ENCODE measurements at regions of chr4 and their contacts with region 1.

Region 1: GRCh38 chr4:163048447-163048846 is 118.2 kb downstream of the NAF1 start:
- DNase-seq: peak in 1 of 2 experiments; percentile 27
- H3K4me3 ChIP-seq: no peak overlapping the region
- H3K4me3 Mint-ChIP-seq: no peak overlapping the region
- H3K27ac Mint-ChIP-seq: no peak overlapping the region
- H3K4me1 ChIP-seq: peaks cover 3% of the 10 kb centered on the region; the same call in 1 of the 2 replicates
- H3K4me1 Mint-ChIP-seq: peaks cover 6% of the 10 kb centered on the region
- H3K27me3 ChIP-seq: no peaks in the 10 kb centered on the region
- H3K27me3 Mint-ChIP-seq: no peaks in the 10 kb centered on the region
- CTCF ChIP-seq: peak; percentile 42 to 47

Region 2: DNA sequence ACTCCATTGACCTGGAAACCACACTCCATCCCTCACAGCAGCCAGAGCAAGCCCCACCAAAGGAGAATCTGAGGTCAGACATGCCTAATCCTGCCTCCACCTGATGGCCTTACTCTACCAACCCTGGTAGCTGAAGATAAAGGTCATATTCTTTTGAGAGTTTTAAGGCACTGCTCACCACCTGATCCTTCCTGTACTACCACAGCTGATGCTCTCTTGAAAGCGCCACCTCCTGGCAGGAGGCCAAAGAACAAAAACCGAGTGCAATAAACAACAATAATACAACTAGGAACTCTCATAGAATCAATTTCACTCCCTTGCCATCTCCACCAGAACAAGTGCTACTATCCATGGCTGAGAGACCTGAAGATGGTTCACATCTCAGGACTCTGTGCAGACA is 183.3 kb before region 1 on chr4:
- CTCF ChIA-PET with region 1: no interaction called
- POLR2A ChIA-PET with region 1: no interaction called
- intact Hi-C with region 1: no loop called
- DNase-seq: peak in 1 of 2 experiments; percentile 21
- H3K4me3 ChIP-seq: no peak overlapping the region
- H3K4me3 Mint-ChIP-seq: no peak overlapping the region
- H3K27ac Mint-ChIP-seq: no peak overlapping the region
- H3K4me1 ChIP-seq: no peaks in the 10 kb centered on the region
- H3K4me1 Mint-ChIP-seq: no peaks in the 10 kb centered on the region
- H3K27me3 ChIP-seq: no peaks in the 10 kb centered on the region
- H3K27me3 Mint-ChIP-seq: no peaks in the 10 kb centered on the region
- CTCF ChIP-seq: peak in 1 of 2 experiments; percentile 4

Region 3: GRCh38 chr4:162988530-162988929 is 59.9 kb before region 1 on chr4:
- CTCF ChIA-PET with region 1: no interaction called
- POLR2A ChIA-PET with region 1: no interaction called
- intact Hi-C with region 1: no loop called
- DNase-seq: no peak
- H3K4me3 ChIP-seq: no peak overlapping the region
- H3K4me3 Mint-ChIP-seq: no peak overlapping the region
- H3K27ac Mint-ChIP-seq: no peak overlapping the region
- H3K4me1 ChIP-seq: no peaks in the 10 kb centered on the region
- H3K4me1 Mint-ChIP-seq: no peaks in the 10 kb centered on the region
- H3K27me3 ChIP-seq: no peaks in the 10 kb centered on the region
- H3K27me3 Mint-ChIP-seq: no peaks in the 10 kb centered on the region
- CTCF ChIP-seq: no peak

Region 4: GRCh38 chr4:163107754-163108153 is 59.3 kb after region 1 on chr4:
- CTCF ChIA-PET with region 1: no interaction called
- POLR2A ChIA-PET with region 1: no interaction called
- intact Hi-C with region 1: loop called (anchors 2 kb)
- DNase-seq: peak in 1 of 2 experiments; percentile 5
- H3K4me3 ChIP-seq: no peak overlapping the region
- H3K4me3 Mint-ChIP-seq: no peak overlapping the region
- H3K27ac Mint-ChIP-seq: no peak overlapping the region
- H3K4me1 ChIP-seq: no peaks in the 10 kb centered on the region
- H3K4me1 Mint-ChIP-seq: no peaks in the 10 kb centered on the region
- H3K27me3 ChIP-seq: no peaks in the 10 kb centered on the region
- H3K27me3 Mint-ChIP-seq: no peaks in the 10 kb centered on the region
- CTCF ChIP-seq: no peak

Region 5: DNA sequence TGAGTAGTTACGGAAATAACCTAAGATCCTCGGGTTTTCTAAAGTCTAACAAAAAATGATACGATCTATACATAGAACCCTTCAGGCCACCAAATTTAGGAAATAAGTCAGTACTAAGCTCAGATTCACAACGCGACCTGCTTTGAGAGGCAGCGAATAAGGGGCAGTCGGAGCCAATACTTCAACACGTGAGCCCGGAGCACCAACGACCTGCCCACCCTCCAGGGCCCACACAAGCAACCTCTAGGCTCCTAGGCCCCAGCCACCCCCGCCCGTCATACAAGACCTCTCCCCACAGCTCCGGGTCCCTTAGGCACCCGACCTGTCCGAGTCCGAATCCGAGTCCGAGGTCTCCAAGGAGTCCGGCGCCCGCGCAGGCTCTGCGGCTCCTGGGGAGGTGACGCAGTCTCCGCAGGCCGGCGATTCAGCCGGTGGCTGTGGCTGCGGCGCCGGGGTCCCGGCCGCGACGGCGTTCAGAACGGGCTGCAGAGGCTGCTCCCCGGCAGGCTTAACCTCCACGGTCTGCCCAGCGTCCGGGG is 117.7 kb after region 1 on chr4:
- CTCF ChIA-PET with region 1: no interaction called
- POLR2A ChIA-PET with region 1: no interaction called
- intact Hi-C with region 1: loop called (anchors 5 kb)
- DNase-seq: peak; percentile 50 to 61
- H3K4me3 ChIP-seq: peak overlapping the region; percentile 79
- H3K4me3 Mint-ChIP-seq: peak overlapping the region; percentile 83
- H3K27ac Mint-ChIP-seq: peak overlapping the region; percentile 98
- H3K4me1 ChIP-seq: no peaks in the 10 kb centered on the region
- H3K4me1 Mint-ChIP-seq: peaks cover 21% of the 10 kb centered on the region
- H3K27me3 ChIP-seq: no peaks in the 10 kb centered on the region
- H3K27me3 Mint-ChIP-seq: no peaks in the 10 kb centered on the region
- CTCF ChIP-seq: no peak

Region 6: GRCh38 chr4:163544407-163545038 is 496.1 kb after region 1 on chr4:
- CTCF ChIA-PET with region 1: no interaction called
- POLR2A ChIA-PET with region 1: no interaction called
- intact Hi-C with region 1: loop called (anchors 5 kb)
- DNase-seq: peak; percentile 50 to 55
- H3K4me3 ChIP-seq: no peak overlapping the region
- H3K4me3 Mint-ChIP-seq: no peak overlapping the region
- H3K27ac Mint-ChIP-seq: no peak overlapping the region
- H3K4me1 ChIP-seq: no peaks in the 10 kb centered on the region
- H3K4me1 Mint-ChIP-seq: no peaks in the 10 kb centered on the region
- H3K27me3 ChIP-seq: no peaks in the 10 kb centered on the region
- H3K27me3 Mint-ChIP-seq: no peaks in the 10 kb centered on the region
- CTCF ChIP-seq: peak; percentile 84 to 90

Region 7: DNA sequence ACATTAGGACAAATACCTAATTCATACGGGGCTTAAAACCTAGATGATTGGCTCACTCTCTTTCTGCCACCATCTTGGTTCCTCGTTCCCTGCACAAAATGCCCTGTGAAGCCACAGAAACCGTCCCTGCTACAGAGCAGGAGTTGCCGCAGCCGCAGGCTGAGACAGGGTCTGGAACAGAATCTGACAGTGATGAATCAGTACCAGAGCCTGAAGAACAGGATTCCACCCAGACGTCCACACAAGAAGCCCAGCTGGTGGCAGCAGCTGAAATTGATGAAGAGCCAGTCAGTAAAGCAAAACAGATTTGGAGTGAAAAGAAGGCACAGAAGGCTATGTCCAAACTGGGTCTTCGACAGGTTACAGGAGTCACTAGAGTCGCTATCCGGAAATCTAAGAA is 1894.7 kb after region 1 on chr4:
- CTCF ChIA-PET with region 1: no interaction called
- POLR2A ChIA-PET with region 1: no interaction called
- intact Hi-C with region 1: no loop called
- DNase-seq: no peak
- H3K4me3 ChIP-seq: no peak overlapping the region
- H3K4me3 Mint-ChIP-seq: no peak overlapping the region
- H3K27ac Mint-ChIP-seq: no peak overlapping the region
- H3K4me1 ChIP-seq: no peaks in the 10 kb centered on the region
- H3K4me1 Mint-ChIP-seq: no peaks in the 10 kb centered on the region
- H3K27me3 ChIP-seq: no peaks in the 10 kb centered on the region
- H3K27me3 Mint-ChIP-seq: peaks cover 4% of the 10 kb centered on the region
- CTCF ChIP-seq: no peak

Measured in Caco-2 (cell line).